Activated naive CD4-positive, alpha-beta T cell treated with anti-CD3 and anti-CD28 coated beads, Interleukin-2, amount 10 ng/mL, durations not matched to agents 7 days and 5 days (primary cell): ENCODE measurements at regions of chr10 and their contacts with region 1.

Region 1: GRCh38 chr10:70146489-70147258 is at the start of gene TYSND1:
- DNase-seq: peak; percentile 97
- H3K4me3 Mint-ChIP-seq: peak within 1 kb of the TSS; percentile 80
- H3K27ac Mint-ChIP-seq: peak within 1 kb of the TSS; percentile 93
- H3K4me1 Mint-ChIP-seq: peaks cover 25% of the 10 kb centered on the region
- H3K27me3 Mint-ChIP-seq: no peaks in the 10 kb centered on the region

Region 2: GRCh38 chr10:69957886-69958555 is 188.7 kb before region 1 on chr10:
- CTCF ChIA-PET with region 1: interaction called, 19 read pairs
- DNase-seq: peak; percentile 43
- H3K4me3 Mint-ChIP-seq: no peak overlapping the region
- H3K27ac Mint-ChIP-seq: no peak overlapping the region
- H3K4me1 Mint-ChIP-seq: no peaks in the 10 kb centered on the region
- H3K27me3 Mint-ChIP-seq: peaks cover 37% of the 10 kb centered on the region

Region 3: GRCh38 chr10:70135684-70136083 is 11.0 kb before region 1 on chr10:
- CTCF ChIA-PET with region 1: interaction called, 15 read pairs
- DNase-seq: no peak
- H3K4me3 Mint-ChIP-seq: no peak overlapping the region
- H3K27ac Mint-ChIP-seq: no peak overlapping the region
- H3K4me1 Mint-ChIP-seq: peaks cover 20% of the 10 kb centered on the region
- H3K27me3 Mint-ChIP-seq: peaks cover 28% of the 10 kb centered on the region

Region 4: DNA sequence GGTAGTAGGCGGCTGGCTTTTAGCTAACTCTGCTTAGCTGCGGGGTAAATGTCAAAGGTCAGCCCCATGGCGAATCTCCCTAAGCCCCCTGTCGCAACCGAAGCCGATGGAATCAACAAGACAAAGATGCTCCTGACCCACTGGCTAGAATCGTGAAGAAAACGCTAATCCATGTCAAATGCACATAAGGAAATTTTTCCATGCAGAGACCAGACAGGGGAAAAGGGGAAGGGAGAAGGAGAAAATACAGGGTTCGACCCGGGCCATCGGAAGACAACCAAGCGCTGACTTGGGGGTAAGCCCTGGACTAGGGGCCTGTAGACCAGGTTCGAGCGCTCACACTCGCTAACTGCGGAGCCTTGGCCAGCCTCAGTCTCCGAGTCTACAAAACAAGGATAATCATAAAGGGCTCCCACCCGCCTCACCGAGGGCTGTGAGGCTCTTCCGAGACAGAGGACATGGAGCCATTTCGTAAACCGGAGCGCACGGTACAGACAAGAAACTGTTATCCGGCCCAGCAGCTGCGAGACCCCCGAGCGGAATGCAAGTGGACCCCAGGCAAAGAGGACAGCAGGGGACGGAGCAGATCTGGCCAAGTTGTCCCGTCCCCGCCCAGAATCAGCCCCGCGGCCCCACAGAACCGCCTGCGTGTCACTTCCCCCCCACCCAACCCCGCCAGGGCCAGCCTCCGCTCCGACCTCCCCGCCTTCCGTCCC is 23.1 kb after region 1 on chr10:
- CTCF ChIA-PET with region 1: interaction called, 47 read pairs
- DNase-seq: no peak
- H3K4me3 Mint-ChIP-seq: peak overlapping the region; percentile 87
- H3K27ac Mint-ChIP-seq: peak overlapping the region; percentile 90
- H3K4me1 Mint-ChIP-seq: peaks cover 72% of the 10 kb centered on the region
- H3K27me3 Mint-ChIP-seq: no peaks in the 10 kb centered on the region

Region 5: DNA sequence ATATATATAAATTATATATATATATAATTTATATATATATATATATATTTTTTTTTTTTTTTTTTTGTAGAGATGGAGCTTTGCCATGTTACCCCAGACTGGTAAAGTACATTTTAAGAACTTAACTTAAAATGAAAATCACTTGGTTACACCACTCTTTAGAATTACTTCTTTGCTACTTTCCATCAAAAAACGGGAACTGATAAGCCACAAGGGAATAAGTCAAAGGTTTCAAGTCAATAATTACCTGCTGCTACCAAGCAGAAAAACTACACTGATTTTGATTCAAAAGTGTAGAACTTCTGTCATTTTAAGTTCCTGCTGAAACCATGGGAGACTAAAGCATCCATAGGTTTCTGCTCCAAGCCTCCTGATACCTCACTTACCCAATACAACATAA is 74.4 kb after region 1 on chr10:
- CTCF ChIA-PET with region 1: interaction called, 12 read pairs
- DNase-seq: no peak
- H3K4me3 Mint-ChIP-seq: no peak overlapping the region
- H3K27ac Mint-ChIP-seq: peak overlapping the region; percentile 80
- H3K4me1 Mint-ChIP-seq: peaks cover 16% of the 10 kb centered on the region
- H3K27me3 Mint-ChIP-seq: no peaks in the 10 kb centered on the region

Region 6: GRCh38 chr10:70634011-70634410 is 487.3 kb after region 1 on chr10:
- CTCF ChIA-PET with region 1: no interaction called
- DNase-seq: no peak
- H3K4me3 Mint-ChIP-seq: no peak overlapping the region
- H3K27ac Mint-ChIP-seq: no peak overlapping the region
- H3K4me1 Mint-ChIP-seq: no peaks in the 10 kb centered on the region
- H3K27me3 Mint-ChIP-seq: peaks cover 19% of the 10 kb centered on the region